ENCODE measurements at regions of chr2 and their contacts with region 1.

Region 1: GRCh38 chr2:60707750-60708371 is 48.2 kb upstream of the PAPOLG start:
- DNase-seq: peak; percentile 18
- ATAC-seq: peak; percentile 63; the same call in 1 of the 2 replicates
- H3K4me3 ChIP-seq: no peak overlapping the region
- H3K27ac ChIP-seq: no peak overlapping the region
- H3K4me1 ChIP-seq: no peaks in the 10 kb centered on the region
- H3K27me3 ChIP-seq: no peaks in the 10 kb centered on the region
- CTCF ChIP-seq: peak; percentile 79

Region 2: DNA sequence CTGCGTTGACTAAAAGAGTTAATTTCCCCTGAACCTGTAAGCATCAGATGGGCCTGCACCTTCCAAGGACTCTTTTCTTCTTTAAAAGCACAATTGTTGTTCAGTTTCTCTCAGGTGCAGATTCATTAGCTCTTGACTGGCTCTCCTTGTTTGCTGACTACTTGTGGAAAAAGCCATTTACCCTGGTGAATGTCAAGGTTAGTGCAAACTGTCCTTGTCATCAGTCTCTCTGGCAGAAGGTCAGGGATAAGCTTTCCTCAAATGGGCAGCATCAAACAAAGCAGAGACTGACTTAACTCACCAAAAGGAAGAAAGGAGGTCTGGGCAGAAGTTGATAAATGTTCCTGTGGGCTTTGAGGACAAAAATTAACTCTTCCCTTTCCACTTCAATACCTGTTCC is 1077.1 kb before region 1 on chr2:
- CTCF ChIA-PET with region 1: no interaction called
- POLR2A ChIA-PET with region 1: no interaction called
- in situ Hi-C with region 1: no loop called
- intact Hi-C with region 1: no loop called
- DNase-seq: no peak
- ATAC-seq: no peak
- H3K4me3 ChIP-seq: no peak overlapping the region
- H3K27ac ChIP-seq: no peak overlapping the region
- H3K4me1 ChIP-seq: no peaks in the 10 kb centered on the region
- H3K27me3 ChIP-seq: no peaks in the 10 kb centered on the region
- CTCF ChIP-seq: no peak

Region 3: GRCh38 chr2:60416221-60417008 is 291.4 kb before region 1 on chr2:
- CTCF ChIA-PET with region 1: no interaction called
- POLR2A ChIA-PET with region 1: no interaction called
- in situ Hi-C with region 1: no loop called
- intact Hi-C with region 1: no loop called
- DNase-seq: no peak
- ATAC-seq: no peak
- H3K4me3 ChIP-seq: no peak overlapping the region
- H3K27ac ChIP-seq: no peak overlapping the region
- H3K4me1 ChIP-seq: no peaks in the 10 kb centered on the region
- H3K27me3 ChIP-seq: no peaks in the 10 kb centered on the region
- CTCF ChIP-seq: no peak

Region 4: DNA sequence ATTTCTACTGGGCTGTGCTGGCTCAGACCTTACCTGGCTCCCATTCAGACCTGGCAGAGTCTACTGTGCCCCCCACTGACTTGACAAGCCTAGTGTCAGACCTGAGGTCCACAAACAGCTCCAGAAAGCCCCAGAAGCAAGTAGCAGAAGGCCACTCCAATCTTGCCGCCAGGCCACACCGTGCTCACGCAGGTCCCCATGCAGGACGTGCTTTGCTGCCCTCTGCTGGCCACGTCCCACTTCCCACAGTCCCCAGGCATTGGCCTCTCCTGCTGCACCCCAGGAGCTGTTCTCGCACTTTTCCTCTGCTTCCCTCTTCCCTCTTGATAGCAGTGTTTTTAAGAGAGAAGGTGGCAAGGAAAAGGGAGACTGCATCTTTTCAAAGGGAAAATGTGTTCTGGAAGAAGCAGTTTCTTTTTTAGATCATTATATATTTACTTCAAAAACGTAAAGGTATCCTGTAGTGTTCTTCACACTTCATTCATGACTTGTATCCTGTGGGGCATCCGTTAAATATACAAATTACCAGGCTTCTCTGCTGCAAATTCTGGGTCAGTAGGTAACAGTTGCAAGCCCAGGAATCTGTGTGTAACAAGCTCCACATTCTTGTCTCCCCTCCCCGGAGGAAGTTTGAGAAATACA is 33.2 kb before region 1 on chr2:
- CTCF ChIA-PET with region 1: no interaction called
- POLR2A ChIA-PET with region 1: no interaction called
- in situ Hi-C with region 1: no loop called
- intact Hi-C with region 1: no loop called
- DNase-seq: peak; percentile 53
- ATAC-seq: peak; percentile 100
- H3K4me3 ChIP-seq: no peak overlapping the region
- H3K27ac ChIP-seq: no peak overlapping the region
- H3K4me1 ChIP-seq: no peaks in the 10 kb centered on the region
- H3K27me3 ChIP-seq: peaks cover 19% of the 10 kb centered on the region
- CTCF ChIP-seq: peak; percentile 98

Region 5: DNA sequence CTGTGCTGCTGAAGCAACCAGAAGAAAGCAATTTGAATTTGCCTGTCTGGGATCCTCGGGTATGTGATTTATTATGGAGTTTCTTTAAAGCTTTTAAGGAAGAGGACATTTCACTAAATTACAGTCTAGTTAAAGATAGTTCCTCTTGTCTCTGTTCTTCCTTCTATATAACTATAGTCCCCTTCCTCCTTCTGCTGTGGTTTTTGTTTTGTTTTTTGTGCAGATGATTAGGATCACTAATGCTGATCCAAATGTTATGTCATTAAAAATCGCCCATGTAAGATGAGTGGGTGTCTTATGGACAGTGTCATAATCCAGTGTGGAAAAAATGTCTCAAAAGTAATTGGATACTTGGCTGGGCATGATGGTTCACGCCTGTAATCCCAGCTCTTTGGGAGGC is 72.9 kb after region 1 on chr2:
- CTCF ChIA-PET with region 1: interaction called, 7 read pairs
- POLR2A ChIA-PET with region 1: no interaction called
- in situ Hi-C with region 1: no loop called
- intact Hi-C with region 1: loop called (anchors 10 kb)
- DNase-seq: no peak
- ATAC-seq: no peak
- H3K4me3 ChIP-seq: no peak overlapping the region
- H3K27ac ChIP-seq: no peak overlapping the region
- H3K4me1 ChIP-seq: no peaks in the 10 kb centered on the region
- H3K27me3 ChIP-seq: no peaks in the 10 kb centered on the region
- CTCF ChIP-seq: no peak

Region 6: DNA sequence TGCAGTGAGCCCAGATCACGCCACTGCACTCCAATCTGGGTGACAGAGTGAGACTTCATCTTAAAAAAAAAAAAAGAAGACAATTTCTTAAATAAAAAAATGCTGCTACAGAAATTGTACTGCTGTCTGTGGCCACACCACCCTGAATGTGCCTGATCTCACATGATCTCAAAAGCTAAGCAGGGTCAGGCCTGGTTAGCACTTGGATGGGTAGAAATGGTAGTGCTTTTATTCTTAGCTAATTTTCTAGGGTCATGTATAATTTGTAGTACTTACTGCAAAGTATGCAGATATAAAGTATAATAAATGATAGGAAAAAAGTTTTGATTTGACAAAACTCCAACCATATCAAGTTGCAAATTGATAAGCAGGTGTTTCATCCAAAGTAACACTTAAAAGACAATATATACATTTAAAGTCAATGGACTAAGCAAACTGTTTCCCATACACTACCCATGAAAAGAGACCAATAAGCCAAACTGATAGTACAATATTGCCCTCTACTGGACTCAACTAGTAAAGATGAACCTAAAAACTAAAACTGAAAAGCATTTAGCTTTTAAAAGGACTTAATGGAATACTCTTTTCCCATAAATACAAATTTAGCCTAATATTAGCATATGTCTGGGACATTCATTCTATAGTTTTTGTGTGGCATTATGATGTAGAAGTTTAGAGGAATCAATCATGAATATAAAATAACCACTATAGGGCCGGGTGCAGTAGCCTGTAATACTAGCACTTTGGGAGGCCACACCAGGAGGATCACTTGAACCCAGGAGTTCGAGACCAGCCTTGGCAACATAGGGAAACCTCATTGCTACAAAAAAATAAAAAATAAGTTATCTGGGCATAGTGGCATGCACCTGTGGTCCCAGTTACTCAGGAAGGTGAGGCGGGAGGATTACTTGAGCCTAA is 291.0 kb after region 1 on chr2:
- CTCF ChIA-PET with region 1: interaction called, 5 read pairs
- POLR2A ChIA-PET with region 1: no interaction called
- in situ Hi-C with region 1: no loop called
- intact Hi-C with region 1: loop called (anchors 2 kb)
- DNase-seq: no peak
- ATAC-seq: peak; percentile 80
- H3K4me3 ChIP-seq: no peak overlapping the region
- H3K27ac ChIP-seq: no peak overlapping the region
- H3K4me1 ChIP-seq: no peaks in the 10 kb centered on the region
- H3K27me3 ChIP-seq: no peaks in the 10 kb centered on the region
- CTCF ChIP-seq: peak; percentile 67; the same call in 1 of the 2 replicates

Measured in Panc1 (cell line).